ENCODE measurements at regions of chr10 and their contacts with region 1.

Region 1: GRCh38 chr10:90977162-90977854 is 56.4 kb upstream of the ANKRD1 start:
- DNase-seq: no peak
- H3K4me3 ChIP-seq: no peak overlapping the region
- H3K27ac ChIP-seq: no peak overlapping the region
- H3K4me1 ChIP-seq: no peaks in the 10 kb centered on the region
- H3K27me3 ChIP-seq: no peaks in the 10 kb centered on the region
- CTCF ChIP-seq: no peak
- EP300 ChIP-seq: no peak
- POLR2A ChIP-seq: no peak

Region 2: GRCh38 chr10:90993340-90993739 is 16.0 kb after region 1 on chr10:
- in situ Hi-C with region 1: no loop called
- intact Hi-C with region 1: loop called (anchors 1 kb)
- DNase-seq: no peak
- H3K4me3 ChIP-seq: no peak overlapping the region
- H3K27ac ChIP-seq: no peak overlapping the region
- H3K4me1 ChIP-seq: no peaks in the 10 kb centered on the region
- H3K27me3 ChIP-seq: peaks cover 5% of the 10 kb centered on the region
- CTCF ChIP-seq: no peak
- EP300 ChIP-seq: no peak
- POLR2A ChIP-seq: no peak

Region 3: GRCh38 chr10:91220194-91220953 is 243.1 kb after region 1 on chr10 and contains the start of gene PCGF5:
- in situ Hi-C with region 1: no loop called
- intact Hi-C with region 1: no loop called
- DNase-seq: peak; percentile 95
- H3K4me3 ChIP-seq: peak within 1 kb of the TSS; percentile 84 to 99 (median 91)
- H3K27ac ChIP-seq: peak within 1 kb of the TSS; percentile 97 to 99 (median 98)
- H3K4me1 ChIP-seq: peaks cover 12 to 50% (median 29%) of the 10 kb centered on the region in 4 donors
- H3K27me3 ChIP-seq: no peaks in the 10 kb centered on the region
- CTCF ChIP-seq: peak; percentile 32 to 78 (median 41)
- EP300 ChIP-seq: no peak
- POLR2A ChIP-seq: peak; percentile 87
- total RNA-seq, gene PCGF5: 26.3 to 94.1 (median 57.0) TPM

Measured in transverse colon (tissue), 4 donors.